ENCODE measurements at regions of chr1 and their contacts with region 1.

Region 1: GRCh38 chr1:204257954-204258752 is 44.4 kb upstream of the GOLT1A start:
- DNase-seq: peak in 1 of 2 experiments; percentile 52
- H3K4me3 ChIP-seq: no peak overlapping the region
- H3K27ac ChIP-seq: no peak overlapping the region
- H3K4me1 ChIP-seq: peaks cover 29% of the 10 kb centered on the region
- H3K27me3 ChIP-seq: no peaks in the 10 kb centered on the region
- CTCF ChIP-seq: peak; percentile 75

Region 2: DNA sequence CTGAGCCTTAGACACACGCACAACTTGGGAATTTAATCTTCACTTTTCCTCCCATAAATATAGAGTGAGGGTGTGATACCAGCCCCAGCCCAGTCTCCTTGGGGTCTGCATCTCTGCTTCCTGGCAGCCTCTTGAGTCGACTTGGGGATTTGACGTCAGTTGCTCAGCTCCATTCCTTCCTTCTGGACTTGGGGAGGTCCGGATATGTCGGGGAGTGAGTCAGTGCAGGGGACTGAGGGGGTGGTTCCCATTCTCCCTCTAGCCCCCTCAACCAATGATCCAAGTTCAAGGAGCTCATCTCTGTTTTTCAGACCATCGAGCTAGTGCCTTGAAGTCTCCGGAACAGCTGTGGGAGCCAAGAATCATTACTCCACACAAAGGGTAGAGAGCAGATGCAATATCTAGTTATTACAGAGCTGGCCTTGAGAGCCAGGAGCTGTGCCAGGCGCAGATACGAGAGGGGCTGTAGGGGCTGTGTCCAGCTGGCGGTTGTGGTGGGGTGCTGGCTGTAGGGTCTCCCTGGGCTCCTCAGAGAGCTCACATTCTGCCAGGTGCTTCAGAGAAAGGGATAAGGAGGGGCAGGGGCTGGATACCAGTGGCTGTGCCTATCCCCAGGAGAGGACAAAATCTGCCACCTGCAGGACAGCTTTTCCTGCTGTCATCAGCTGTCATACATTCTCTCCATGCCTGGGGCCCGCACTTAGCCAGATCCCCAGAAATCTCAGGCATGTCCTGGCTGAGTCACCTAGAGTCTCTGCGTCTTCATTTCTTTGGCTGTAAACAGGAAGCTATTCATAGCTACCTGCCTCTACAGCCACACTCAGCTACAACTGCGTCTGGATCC is 59.8 kb before region 1 on chr1:
- CTCF ChIA-PET with region 1: no interaction called
- POLR2A ChIA-PET with region 1: interaction called, 10 read pairs
- intact Hi-C with region 1: no loop called
- DNase-seq: peak; percentile 90 to 95
- H3K4me3 ChIP-seq: peak overlapping the region; percentile 32; the same call in 1 of the 2 replicates
- H3K27ac ChIP-seq: peak overlapping the region; percentile 82
- H3K4me1 ChIP-seq: peaks cover 44% of the 10 kb centered on the region
- H3K27me3 ChIP-seq: no peaks in the 10 kb centered on the region
- CTCF ChIP-seq: peak; percentile 54

Region 3: GRCh38 chr1:204363335-204364124 is 105.4 kb after region 1 on chr1:
- CTCF ChIA-PET with region 1: no interaction called
- POLR2A ChIA-PET with region 1: no interaction called
- intact Hi-C with region 1: loop called (anchors 1 kb)
- DNase-seq: peak; percentile 34 to 54
- H3K4me3 ChIP-seq: no peak overlapping the region
- H3K27ac ChIP-seq: no peak overlapping the region
- H3K4me1 ChIP-seq: 0 out of 2 replicates have a peak, but pooled peaks cover 3% of the 10 kb centered on the region
- H3K27me3 ChIP-seq: no peaks in the 10 kb centered on the region
- CTCF ChIP-seq: peak; percentile 98

Region 4: GRCh38 chr1:204544321-204544720 is 286.2 kb after region 1 on chr1:
- CTCF ChIA-PET with region 1: no interaction called
- POLR2A ChIA-PET with region 1: interaction called, 24 read pairs
- intact Hi-C with region 1: no loop called
- DNase-seq: no peak
- H3K4me3 ChIP-seq: no peak overlapping the region
- H3K27ac ChIP-seq: no peak overlapping the region
- H3K4me1 ChIP-seq: no peaks in the 10 kb centered on the region
- H3K27me3 ChIP-seq: no peaks in the 10 kb centered on the region
- CTCF ChIP-seq: no peak